Right lobe of liver (tissue), 6 donors: ENCODE measurements at regions of chr7 and their contacts with region 1.

Region 1: DNA sequence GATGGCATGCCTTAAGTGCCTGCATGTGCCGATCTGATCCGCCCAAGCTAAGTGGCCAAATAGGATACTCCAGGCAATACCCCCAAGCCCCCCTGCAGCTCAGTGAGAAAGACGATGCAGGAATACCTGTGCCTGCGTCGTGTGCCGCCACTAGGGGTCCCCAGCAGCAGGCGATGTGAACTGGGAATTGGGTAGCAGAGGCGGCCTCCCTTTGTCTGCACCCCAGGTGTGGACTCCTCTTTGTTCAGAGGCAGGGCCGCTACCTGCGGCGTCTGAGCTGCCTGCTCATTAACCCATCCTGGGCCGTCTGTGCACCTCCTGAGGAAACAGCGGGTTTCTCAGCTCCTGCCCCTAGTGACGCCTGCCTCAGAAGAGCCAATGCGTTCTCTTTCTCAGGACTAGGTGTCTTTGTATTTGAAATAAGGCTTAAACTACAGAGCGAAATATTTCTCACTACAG is 4.8 kb upstream of the CHN2 start:
- DNase-seq: peak; percentile 78 to 80 (median 79)
- ATAC-seq: peak; percentile 71 to 79 (median 78)
- H3K4me3 ChIP-seq: peak overlapping the region in 2 of 3 donors; percentile 6 to 37
- H3K27ac ChIP-seq: peak overlapping the region in 2 of 3 donors; percentile 57 to 71
- H3K4me1 ChIP-seq: peaks cover 0 to 24% (median 7%) of the 10 kb centered on the region in 4 donors
- H3K27me3 ChIP-seq: no peaks in the 10 kb centered on the region
- CTCF ChIP-seq: peak; percentile 85 to 87 (median 87)
- POLR2A ChIP-seq: no peak

Region 2: DNA sequence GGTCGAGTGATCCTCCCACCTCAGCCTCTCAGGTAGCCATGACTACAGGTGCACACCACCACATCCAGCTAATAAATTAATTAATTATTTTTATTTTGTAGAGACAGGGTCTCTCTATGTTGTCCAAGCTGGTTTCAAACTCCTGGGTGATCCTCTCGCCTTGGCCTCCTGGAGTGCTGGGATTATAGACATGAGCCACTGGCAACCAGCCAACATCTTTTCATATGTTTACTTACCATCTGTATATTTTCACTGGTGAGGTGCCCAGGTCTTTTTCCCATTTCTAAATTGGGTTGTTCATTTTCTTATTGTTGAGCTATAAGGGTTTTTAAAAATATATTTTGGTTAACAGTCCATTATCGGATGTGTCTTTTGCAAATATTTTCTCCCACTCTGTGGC is 132.7 kb before region 1 on chr7:
- intact Hi-C with region 1: no loop called
- DNase-seq: no peak
- ATAC-seq: no peak
- H3K4me3 ChIP-seq: no peak overlapping the region
- H3K27ac ChIP-seq: no peak overlapping the region
- H3K4me1 ChIP-seq: no peaks in the 10 kb centered on the region
- H3K27me3 ChIP-seq: no peaks in the 10 kb centered on the region
- CTCF ChIP-seq: no peak
- POLR2A ChIP-seq: no peak

Region 3: DNA sequence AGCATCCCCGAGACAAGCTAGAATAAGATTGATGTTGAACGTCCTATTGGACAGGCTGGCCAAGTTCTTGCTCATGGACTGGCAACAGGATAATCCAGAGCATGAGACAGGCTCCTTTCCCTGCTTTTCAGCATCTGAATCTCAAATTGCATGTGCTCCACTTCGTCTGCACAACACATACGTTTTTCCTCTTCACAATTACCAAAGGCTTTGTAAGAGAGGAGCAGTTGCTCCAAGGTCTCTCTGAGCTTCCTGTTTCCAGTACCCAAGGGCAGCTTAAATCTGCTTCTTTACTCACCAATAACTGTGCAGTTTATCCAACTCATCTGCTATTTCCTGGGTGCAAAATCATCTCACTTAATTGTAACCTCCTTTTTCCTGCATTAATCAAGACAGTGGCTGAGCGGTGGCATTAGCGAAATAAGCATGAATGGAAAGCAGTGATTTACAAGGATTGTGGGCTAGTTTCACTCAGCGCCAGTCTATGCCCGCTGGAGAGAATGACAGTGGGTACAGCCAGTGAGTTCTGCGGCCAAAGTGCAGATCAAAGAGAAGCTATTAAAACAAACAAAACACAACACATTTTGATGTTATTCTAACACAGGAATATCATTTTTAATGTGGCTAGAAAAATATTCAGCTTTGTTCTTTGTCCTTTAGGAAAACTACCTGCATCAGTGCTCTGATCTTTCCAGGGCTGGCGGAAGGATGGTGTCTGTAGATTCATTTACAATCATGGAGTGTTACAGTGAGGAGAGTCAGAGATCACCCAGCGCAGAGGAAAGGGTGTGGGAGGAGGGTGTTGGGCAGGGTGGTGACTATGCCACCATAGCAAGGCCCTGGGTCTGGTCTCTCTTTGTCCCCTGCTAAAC is 84.6 kb after region 1 on chr7:
- intact Hi-C with region 1: no loop called
- DNase-seq: no peak
- ATAC-seq: peak; percentile 60 to 65 (median 64)
- H3K4me3 ChIP-seq: no peak overlapping the region
- H3K27ac ChIP-seq: peak overlapping the region in 2 of 3 donors; percentile 25 to 41
- H3K4me1 ChIP-seq: peaks cover 0 to 51% (median 20%) of the 10 kb centered on the region in 4 donors
- H3K27me3 ChIP-seq: no peaks in the 10 kb centered on the region
- CTCF ChIP-seq: no peak
- POLR2A ChIP-seq: no peak

Region 4: GRCh38 chr7:29408841-29409243 is 219.1 kb after region 1 on chr7:
- intact Hi-C with region 1: loop called in 1 of 2 experiments (anchors 10 kb)
- DNase-seq: peak in 1 of 3 donors; percentile 55
- ATAC-seq: peak; percentile 52 to 71 (median 66)
- H3K4me3 ChIP-seq: no peak overlapping the region
- H3K27ac ChIP-seq: no peak overlapping the region
- H3K4me1 ChIP-seq: peaks cover 0 to 24% (median 3%) of the 10 kb centered on the region in 4 donors
- H3K27me3 ChIP-seq: no peaks in the 10 kb centered on the region
- CTCF ChIP-seq: peak; percentile 79 to 95 (median 84)
- POLR2A ChIP-seq: no peak

Region 5: GRCh38 chr7:29878081-29878688 is 688.4 kb after region 1 on chr7:
- intact Hi-C with region 1: no loop called
- DNase-seq: no peak
- ATAC-seq: no peak
- H3K4me3 ChIP-seq: no peak overlapping the region
- H3K27ac ChIP-seq: no peak overlapping the region
- H3K4me1 ChIP-seq: no peaks in the 10 kb centered on the region
- H3K27me3 ChIP-seq: no peaks in the 10 kb centered on the region
- CTCF ChIP-seq: peak; percentile 13 to 36 (median 30)
- POLR2A ChIP-seq: no peak